MCF 10A (cell line): ENCODE measurements at regions of chr17 and their contacts with region 1.

Region 1: DNA sequence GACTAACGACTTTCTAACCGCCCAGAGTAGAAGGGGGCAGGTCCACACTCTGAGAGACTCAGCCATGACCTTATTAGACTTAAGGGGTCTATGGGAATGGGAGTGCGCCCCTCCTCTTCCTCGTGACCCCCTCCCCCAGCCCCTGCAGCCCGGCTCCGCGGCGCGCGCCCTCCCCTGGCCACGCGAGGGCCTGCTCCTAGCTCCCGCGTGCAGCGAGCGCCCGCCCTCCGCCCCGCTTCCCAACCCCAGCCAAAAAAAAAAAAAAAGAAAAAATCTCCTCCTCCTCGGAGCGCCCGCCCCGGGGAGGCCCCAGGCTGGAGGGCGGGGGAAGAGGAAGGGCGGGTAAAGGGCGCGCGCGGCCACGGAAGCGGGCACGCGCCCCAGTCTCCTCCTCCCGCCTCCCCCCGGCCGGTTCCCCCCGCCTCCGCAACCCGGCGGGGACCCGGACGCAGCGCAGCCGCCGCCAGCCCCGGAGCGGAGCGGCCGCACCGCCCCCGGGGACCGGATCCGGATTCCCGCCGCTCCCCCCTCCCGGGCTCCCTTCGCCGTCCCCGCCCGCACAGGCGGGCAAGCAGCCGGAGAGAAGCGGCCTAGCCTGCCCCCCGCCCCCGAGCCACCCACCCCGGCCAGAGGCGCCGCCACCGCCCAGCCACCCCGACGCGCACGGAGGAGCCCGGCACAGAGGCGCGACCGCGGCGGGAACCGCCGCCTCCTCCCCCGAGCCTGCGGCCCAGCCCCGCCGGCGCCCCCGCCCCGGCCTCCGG is 949 bp downstream of the UBTF start:
- DNase-seq: peak; percentile 92
- H3K4me3 Mint-ChIP-seq: peak overlapping the region; percentile 76
- H3K27ac Mint-ChIP-seq: peak overlapping the region; percentile 87
- H3K4me1 Mint-ChIP-seq: peaks cover 26% of the 10 kb centered on the region
- H3K27me3 Mint-ChIP-seq: no peaks in the 10 kb centered on the region
- CTCF ChIP-seq: peak; percentile 67

Region 2: DNA sequence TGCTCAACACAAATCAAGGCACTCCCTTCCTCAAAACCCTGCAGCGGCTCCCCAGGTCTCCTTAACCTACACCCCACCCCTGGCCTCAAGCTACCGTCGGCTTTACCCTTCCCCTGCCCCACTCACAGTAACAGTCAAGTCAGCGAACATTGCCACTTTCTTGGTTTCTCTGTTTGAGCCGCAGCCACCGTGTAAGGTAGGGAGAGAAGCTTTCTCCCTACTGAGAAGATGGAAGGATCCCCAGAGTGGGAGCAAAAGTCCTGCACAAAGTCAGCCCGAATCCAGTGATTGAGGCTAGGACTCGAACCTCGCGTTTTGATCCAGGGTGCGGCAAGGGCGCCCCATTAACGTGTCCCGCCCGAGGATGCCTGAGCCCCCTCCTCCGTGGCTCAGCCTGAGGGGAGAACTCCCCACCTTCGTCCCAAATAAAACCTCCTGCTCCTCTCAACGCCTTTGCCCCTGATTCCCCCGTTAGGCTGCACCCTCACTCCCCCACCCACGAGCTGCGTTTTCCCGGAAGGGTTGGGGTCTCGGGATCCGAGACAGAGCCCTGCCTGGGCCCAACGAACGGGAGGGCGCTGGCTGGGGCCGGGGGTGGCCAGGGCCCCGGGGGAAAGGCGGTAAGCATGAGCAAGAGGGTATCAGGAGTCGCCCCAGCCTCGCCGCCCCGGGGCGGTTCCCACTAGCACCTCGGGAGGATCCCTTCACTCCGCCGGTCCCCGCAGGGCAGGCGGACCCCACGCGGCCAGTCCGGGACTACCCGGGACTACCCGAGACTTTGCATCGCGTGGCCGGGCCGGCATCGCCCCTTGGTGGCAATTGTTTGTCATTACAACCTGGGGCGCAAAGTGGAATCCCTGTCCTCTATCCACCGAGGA is 224.0 kb before region 1 on chr17:
- CTCF ChIA-PET with region 1: no interaction called
- POLR2A ChIA-PET with region 1: no interaction called
- intact Hi-C with region 1: no loop called
- DNase-seq: peak; percentile 69
- H3K4me3 Mint-ChIP-seq: peak overlapping the region; percentile 64
- H3K27ac Mint-ChIP-seq: no peak overlapping the region
- H3K4me1 Mint-ChIP-seq: peaks cover 8% of the 10 kb centered on the region
- H3K27me3 Mint-ChIP-seq: no peaks in the 10 kb centered on the region
- CTCF ChIP-seq: peak; percentile 95

Region 3: DNA sequence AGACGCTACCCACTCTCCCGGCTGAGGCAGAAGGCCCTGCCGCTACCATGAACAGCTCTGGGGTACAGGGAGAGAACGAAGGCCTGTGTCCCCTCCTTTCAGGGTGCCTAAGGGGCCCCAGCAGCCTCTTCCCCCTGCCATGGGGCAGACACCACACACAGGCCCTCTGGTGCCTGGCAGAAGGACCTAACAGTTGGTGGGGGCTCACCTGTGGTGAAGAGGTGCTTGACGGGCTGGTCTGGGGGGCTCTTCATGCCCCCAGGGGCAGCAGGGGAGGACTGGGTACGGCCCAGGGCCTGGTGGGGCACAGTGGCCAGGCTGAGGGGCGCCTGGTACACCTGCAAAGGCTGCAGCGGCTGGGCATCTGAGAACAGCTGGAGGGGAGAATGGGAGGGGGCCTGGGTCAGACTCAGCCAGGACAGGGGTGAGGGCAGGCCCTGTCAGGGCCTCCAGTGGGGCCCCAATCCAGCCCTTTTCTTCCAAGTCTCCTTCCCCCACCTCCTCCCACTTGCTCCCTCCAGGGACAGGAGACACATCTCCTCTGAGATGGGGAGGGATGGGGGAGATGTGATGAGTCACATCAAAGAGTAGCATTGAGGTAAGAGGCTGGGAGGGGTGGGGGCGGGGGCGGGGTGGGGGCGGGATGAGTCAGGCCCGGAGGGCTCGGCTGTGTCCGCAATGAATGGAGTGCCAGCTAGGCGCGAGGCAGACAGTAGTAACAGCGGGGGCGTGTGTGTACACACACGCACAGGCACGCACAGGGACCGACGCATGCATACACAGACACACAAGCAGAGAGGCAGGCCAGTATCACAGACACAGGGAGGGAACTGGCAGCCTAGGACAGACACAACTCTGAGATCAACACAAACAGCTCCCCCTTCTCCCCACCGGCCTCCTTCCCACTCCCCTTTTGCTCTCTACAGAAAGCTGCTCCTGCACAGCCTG is 131.9 kb before region 1 on chr17:
- CTCF ChIA-PET with region 1: no interaction called
- POLR2A ChIA-PET with region 1: no interaction called
- intact Hi-C with region 1: no loop called
- DNase-seq: peak; percentile 90
- H3K4me3 Mint-ChIP-seq: peak overlapping the region; percentile 40
- H3K27ac Mint-ChIP-seq: peak overlapping the region; percentile 52
- H3K4me1 Mint-ChIP-seq: peaks cover 21% of the 10 kb centered on the region
- H3K27me3 Mint-ChIP-seq: no peaks in the 10 kb centered on the region
- CTCF ChIP-seq: no peak

Region 4: DNA sequence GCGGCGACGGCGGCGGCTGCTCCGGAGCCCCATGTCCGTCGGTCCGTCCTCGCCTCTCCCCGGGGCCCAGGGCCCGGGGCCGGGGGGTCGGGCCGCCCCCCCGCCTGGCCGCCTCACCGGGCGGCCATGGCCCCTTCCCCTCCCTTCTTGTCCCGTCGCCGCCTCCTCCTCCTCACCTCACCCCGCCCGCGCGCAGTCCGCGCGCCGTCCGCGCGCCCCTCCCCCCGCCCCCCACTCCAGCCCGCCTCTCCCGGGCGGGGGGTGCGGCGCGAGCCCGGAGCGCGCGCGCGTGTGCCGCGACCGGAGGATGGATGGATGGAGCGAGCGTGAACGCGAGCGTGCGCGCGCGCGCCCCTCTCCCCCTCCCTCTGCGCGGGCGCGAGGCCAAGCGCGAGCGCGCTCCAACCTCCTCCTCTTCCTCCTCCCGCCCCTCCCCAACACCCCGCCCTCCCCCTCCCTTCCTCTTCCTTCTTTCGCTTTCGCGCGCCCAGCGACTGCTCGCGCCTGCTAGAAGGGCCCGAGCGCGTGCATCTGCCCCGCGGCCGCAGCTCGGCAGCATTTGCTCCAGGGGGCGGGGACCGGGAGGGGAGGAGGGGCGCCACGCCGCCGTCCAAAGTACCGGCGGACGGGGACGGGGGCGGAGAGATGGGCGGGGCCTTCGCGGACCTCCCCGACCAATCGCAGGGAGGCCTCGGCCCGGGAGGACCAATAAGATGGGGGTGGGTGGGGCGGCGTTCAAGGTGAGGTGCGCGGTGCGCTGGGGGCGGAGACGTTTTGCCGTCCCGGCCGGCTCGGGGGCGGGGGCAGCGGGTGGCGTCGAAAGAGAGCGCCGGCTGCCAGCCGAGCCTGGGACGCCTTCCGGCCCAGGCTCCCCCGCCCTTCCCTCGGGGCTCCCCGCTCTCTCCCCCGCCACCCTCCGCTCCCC is 18.7 kb before region 1 on chr17 and contains the start of gene ATXN7L3:
- CTCF ChIA-PET with region 1: interaction called, 22 read pairs
- POLR2A ChIA-PET with region 1: interaction called, 65 read pairs
- intact Hi-C with region 1: loop called (anchors 1 kb)
- DNase-seq: peak; percentile 97
- H3K4me3 Mint-ChIP-seq: peak within 1 kb of the TSS; percentile 89
- H3K27ac Mint-ChIP-seq: peak within 1 kb of the TSS; percentile 95
- H3K4me1 Mint-ChIP-seq: peaks cover 45% of the 10 kb centered on the region
- H3K27me3 Mint-ChIP-seq: no peaks in the 10 kb centered on the region
- CTCF ChIP-seq: no peak
- total RNA-seq, gene ATXN7L3: 65.7 and 74.8 TPM in 2 replicates

Region 5: GRCh38 chr17:44241106-44241624 is 22.6 kb after region 1 on chr17:
- CTCF ChIA-PET with region 1: no interaction called
- POLR2A ChIA-PET with region 1: no interaction called
- intact Hi-C with region 1: no loop called
- DNase-seq: no peak
- H3K4me3 Mint-ChIP-seq: no peak overlapping the region
- H3K27ac Mint-ChIP-seq: no peak overlapping the region
- H3K4me1 Mint-ChIP-seq: no peaks in the 10 kb centered on the region
- H3K27me3 Mint-ChIP-seq: no peaks in the 10 kb centered on the region
- CTCF ChIP-seq: no peak

Region 6: DNA sequence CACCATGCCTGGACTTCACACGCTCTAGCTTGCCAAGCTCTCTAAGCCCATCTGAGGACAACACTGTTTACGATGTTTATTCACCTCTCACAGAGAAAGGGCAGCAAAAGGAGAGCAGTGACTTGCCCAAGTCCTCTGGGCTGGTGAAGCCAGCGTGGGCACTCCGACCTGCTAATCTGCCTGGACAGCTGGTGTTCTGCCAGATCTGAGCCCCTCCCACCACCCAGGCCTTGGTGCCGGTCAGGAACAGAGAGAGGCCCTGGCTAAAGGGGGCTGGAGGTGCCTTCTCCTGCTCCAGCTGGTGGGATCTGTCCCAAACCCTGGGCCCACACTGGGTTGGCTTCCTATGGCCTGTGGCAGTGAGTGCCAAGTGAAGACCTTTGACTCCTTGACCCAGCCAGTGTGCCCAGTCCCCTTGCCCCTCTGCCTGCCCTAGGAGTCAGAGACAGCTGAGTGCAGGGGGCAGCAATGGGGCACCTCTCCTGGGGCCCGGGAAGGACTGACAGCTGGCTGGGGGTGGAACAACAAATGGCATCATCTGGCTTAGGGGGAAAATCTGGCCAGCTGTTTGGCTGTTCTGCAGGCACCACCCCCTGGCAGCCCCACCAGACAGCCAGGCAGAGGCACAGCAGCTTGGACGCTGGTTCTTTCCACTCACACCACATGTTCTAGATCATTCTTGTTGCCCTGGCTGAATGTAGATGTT is 51.2 kb after region 1 on chr17:
- CTCF ChIA-PET with region 1: no interaction called
- POLR2A ChIA-PET with region 1: no interaction called
- intact Hi-C with region 1: no loop called
- DNase-seq: no peak
- H3K4me3 Mint-ChIP-seq: no peak overlapping the region
- H3K27ac Mint-ChIP-seq: no peak overlapping the region
- H3K4me1 Mint-ChIP-seq: peaks cover 9% of the 10 kb centered on the region
- H3K27me3 Mint-ChIP-seq: peaks cover 4% of the 10 kb centered on the region
- CTCF ChIP-seq: no peak

Region 7: GRCh38 chr17:44308320-44308818 is 89.8 kb after region 1 on chr17 and contains the start of gene RUNDC3A:
- CTCF ChIA-PET with region 1: interaction called, 4 read pairs
- POLR2A ChIA-PET with region 1: interaction called, 11 read pairs
- intact Hi-C with region 1: no loop called
- DNase-seq: peak; percentile 71
- H3K4me3 Mint-ChIP-seq: peak within 1 kb of the TSS; percentile 68
- H3K27ac Mint-ChIP-seq: no peak within 1 kb of the TSS
- H3K4me1 Mint-ChIP-seq: peaks cover 10% of the 10 kb centered on the region
- H3K27me3 Mint-ChIP-seq: peaks cover 15% of the 10 kb centered on the region
- CTCF ChIP-seq: no peak
- total RNA-seq, gene RUNDC3A: 0.28 and 1.0 TPM in 2 replicates

Region 8: DNA sequence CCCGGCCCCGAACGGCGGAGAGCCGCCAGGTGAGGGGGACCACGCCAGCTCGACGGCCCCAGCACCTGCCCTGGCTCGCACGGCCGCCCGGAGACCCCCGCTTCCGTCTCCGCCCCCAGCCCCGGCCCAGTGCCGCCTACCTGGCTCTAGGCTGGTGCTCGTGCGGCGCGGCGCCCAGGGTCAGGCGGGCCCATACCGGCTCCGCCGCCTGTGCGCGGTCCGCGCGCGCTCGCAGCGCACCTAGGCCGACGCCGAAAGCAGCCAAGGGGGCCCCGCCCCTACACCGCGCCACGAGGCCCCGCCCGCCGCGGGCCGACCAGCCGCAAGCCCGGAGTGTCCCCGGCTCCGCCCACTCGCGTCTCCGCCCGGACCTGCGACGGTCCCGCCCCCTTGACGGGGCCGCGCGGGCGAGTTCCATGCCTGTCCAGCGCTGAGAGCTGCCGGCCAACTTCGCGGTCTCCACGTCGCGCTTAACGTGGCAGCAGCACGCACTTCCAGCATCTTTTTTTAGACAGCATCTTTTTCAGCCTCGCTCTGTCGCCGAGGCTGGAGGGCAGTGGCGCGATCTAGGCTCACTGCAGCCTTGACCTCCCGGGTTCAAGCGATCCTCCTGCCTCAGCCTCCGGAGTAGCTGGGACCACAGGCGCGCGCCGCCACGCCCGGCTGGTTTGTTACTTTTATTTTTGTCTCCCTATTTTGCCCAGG is 106.2 kb after region 1 on chr17 and contains the start of gene SLC25A39:
- CTCF ChIA-PET with region 1: interaction called, 3 read pairs
- POLR2A ChIA-PET with region 1: interaction called, 61 read pairs
- intact Hi-C with region 1: loop called (anchors 2 kb)
- DNase-seq: peak; percentile 89
- H3K4me3 Mint-ChIP-seq: peak within 1 kb of the TSS; percentile 82
- H3K27ac Mint-ChIP-seq: peak within 1 kb of the TSS; percentile 93
- H3K4me1 Mint-ChIP-seq: no peaks in the 10 kb centered on the region
- H3K27me3 Mint-ChIP-seq: no peaks in the 10 kb centered on the region
- CTCF ChIP-seq: no peak
- total RNA-seq, gene SLC25A39: 157 and 169 TPM in 2 replicates